HEK293T (cell line): ENCODE measurements at regions of chr3 and their contacts with region 1.

Region 1: DNA sequence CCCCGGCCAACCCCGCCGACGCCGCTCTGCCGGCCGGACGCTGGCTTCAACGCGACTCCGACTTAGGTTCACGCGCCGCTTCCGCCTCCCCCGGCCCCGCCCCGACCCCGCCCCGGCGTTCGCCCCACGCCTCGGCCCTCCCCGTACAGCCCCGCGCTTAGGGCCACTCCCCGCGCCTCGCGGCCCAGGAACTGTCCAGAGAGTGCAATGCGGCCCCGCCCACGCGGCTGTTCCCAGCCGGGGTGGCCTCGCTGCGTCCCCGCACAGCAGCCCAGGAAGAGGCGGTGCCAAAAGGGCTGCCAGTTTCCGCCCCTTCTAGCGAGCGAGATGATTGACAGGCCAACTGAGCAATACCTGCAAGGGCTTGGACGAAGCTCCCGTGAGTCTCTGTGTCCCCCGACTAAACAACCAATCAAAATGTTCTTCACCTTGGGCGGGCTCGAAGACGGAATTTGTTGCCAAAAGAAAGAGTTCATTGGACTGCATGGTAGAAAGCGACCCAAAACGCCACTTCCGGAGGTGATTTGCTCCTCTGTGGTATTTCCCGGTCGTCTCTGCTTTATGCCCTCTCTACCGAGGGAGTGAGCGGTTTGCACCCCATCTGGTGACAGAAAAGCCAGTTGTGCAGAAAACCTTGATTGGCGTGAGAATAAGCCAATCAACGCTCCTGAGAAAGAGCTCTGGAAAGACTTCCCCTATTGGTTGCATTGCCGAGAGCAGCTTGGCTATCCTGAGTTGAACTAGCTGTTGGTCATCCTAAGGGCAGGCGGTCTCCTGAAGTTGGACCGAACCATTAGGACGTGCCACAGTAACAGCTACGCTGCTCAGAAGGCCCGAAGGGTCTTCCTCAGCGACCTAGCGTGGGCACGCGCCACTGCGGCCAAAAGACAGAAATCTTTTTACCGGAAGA is at the start of gene UBP1:
- DNase-seq: peak; percentile 96

Region 2: GRCh38 chr3:33360136-33360825 is 80.3 kb before region 1 on chr3:
- CTCF ChIA-PET with region 1: no interaction called
- POLR2A ChIA-PET with region 1: no interaction called
- DNase-seq: no peak

Region 3: DNA sequence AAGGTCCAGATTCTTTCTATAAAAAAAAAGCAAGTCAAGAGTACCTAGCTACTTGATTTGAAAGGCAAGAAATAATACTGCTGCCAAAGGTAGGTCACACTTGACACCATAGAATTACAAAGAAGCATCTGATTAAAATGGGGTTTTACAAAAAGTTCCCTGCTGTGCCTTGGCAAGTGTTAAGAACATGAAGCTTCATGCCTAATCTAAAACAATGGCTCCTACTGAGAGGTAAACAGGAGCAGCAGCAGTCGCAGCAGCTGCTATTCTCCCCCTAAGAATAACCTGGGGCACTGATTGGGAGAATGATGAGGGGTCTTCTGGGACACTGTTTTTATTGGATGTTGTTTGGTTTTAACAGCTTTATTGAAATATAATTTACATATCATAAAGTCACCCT is 14.5 kb before region 1 on chr3:
- CTCF ChIA-PET with region 1: interaction called, 3 read pairs
- POLR2A ChIA-PET with region 1: interaction called, 54 read pairs
- DNase-seq: no peak

Region 4: GRCh38 chr3:33798411-33799201 is 358.0 kb after region 1 on chr3 and contains the start of gene PDCD6IP:
- CTCF ChIA-PET with region 1: no interaction called
- POLR2A ChIA-PET with region 1: interaction called, 13 read pairs
- DNase-seq: peak; percentile 94